Ascending aorta (tissue), 2 donors: ENCODE measurements at regions of chr11 and their contacts with region 1.

Region 1: GRCh38 chr11:12893787-12894672 is 115.1 kb upstream of the RASSF10 start:
- DNase-seq: peak in 1 of 2 donors; percentile 86
- H3K4me3 ChIP-seq: no peak overlapping the region
- H3K27ac ChIP-seq: no peak overlapping the region
- H3K4me1 ChIP-seq: peaks cover 13 to 48% of the 10 kb centered on the region in 2 donors
- H3K27me3 ChIP-seq: no peaks in the 10 kb centered on the region
- CTCF ChIP-seq: peak; percentile 75 to 95 (median 89)

Region 2: GRCh38 chr11:12052676-12053605 is 841.1 kb before region 1 on chr11:
- intact Hi-C with region 1: loop called (anchors 10 kb)
- DNase-seq: peak in 1 of 2 donors; percentile 58
- H3K4me3 ChIP-seq: no peak overlapping the region
- H3K27ac ChIP-seq: peak overlapping the region; percentile 41 to 62
- H3K4me1 ChIP-seq: peaks cover 0 to 25% of the 10 kb centered on the region in 2 donors
- H3K27me3 ChIP-seq: no peaks in the 10 kb centered on the region
- CTCF ChIP-seq: no peak

Region 3: DNA sequence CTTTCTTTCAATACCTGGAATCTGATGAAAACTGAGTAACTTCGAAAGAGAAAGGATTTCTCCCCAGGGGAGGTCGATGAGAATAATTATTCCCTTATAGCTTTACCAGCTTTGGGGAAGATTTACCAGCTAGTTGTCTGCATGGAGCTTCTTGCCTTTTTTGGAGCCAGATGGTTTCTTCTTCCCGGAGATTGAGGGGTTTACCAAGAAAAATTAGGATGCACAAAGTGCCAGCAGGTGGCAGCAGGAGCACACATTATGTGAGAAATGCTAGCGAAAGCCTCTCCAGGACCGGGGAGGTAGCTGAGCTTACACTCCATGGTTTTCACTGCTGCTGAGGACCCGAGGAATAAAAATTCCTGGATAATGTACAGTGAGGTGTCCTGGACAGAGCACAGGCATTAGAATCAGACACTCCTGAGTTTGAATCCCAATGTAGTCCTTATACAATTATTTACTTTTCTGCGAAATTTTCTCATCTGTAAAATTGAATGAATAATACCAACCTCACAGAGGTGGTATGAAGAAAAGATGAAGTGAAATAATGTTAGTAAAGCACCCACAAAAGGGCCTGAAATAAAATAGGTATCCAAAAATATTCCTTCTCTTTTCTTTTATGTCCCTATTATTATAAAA is 562.7 kb before region 1 on chr11:
- intact Hi-C with region 1: loop called (anchors 1 kb)
- DNase-seq: peak in 1 of 2 donors; percentile 88
- H3K4me3 ChIP-seq: no peak overlapping the region
- H3K27ac ChIP-seq: no peak overlapping the region
- H3K4me1 ChIP-seq: peaks cover 0 to 3% of the 10 kb centered on the region in 2 donors
- H3K27me3 ChIP-seq: no peaks in the 10 kb centered on the region
- CTCF ChIP-seq: peak; percentile 63 to 78 (median 74)

Region 4: DNA sequence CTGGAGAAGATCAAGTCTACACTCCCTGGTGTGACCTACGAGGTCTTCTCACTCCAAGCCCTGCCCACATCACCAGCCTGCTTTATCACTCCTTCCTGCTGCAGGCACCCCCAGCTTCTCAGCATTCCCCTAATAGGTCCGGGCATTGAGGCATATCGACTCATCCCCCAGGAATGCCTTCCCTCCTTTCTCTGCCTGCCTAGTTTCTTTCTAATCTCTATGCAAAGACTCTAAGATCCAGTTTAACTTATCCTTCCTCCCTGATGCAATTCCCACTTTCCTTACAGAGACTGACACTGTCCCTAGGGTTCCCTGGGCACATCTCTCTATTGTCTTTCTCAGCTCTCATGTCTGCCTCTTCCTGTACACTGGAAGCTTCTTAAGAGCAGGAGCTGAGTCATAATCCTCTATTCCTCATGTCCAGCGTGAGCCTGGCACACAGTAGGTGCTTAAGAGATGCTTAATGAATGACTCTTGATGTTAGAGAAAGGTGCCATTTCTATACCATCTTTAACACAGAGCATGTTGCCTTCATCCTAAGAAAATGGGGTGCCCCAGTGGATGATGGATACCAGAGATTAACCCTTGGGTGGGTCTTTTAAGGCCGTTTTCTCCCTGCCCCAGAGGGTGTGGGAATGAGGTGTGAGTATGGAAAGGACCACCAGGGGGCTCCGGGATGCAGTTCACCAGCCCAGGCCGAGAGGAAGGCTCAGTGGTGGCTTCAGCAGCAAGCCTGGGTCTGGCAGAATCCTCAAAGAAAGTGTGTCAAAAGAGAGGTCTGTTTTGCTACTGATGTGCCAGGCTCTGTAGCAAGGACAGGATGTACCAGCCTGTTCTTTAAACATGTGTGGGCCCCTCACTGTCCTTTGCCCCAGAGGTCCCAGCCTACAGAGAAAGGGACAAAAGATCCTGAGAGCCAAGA is 482.0 kb before region 1 on chr11:
- intact Hi-C with region 1: loop called (anchors 5 kb)
- DNase-seq: peak in 1 of 2 donors; percentile 89
- H3K4me3 ChIP-seq: no peak overlapping the region
- H3K27ac ChIP-seq: peak overlapping the region; percentile 85
- H3K4me1 ChIP-seq: peaks cover 12 to 41% of the 10 kb centered on the region in 2 donors
- H3K27me3 ChIP-seq: no peaks in the 10 kb centered on the region
- CTCF ChIP-seq: peak; percentile 69 to 75 (median 69)

Region 5: DNA sequence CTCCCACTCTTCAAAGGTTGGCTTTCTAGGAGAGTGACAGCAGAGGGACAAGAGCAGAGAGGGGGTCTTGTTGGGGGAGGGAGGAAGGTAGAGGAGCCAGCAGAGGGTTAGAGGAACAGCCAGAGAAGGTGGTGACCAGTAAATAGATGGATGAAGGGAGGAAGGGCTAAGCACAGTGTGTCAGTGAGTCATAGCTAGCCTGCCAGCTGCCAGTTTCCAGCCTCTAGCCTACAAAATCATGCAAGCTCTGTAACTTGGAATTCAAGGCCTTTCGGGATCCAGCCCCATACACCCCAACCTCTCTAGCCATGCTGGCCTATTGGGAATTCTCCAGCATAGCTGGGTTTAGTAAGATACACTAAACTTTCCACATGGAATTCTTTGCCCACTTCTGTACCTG is 367.2 kb before region 1 on chr11:
- intact Hi-C with region 1: loop called (anchors 10 kb)
- DNase-seq: no peak
- H3K4me3 ChIP-seq: no peak overlapping the region
- H3K27ac ChIP-seq: no peak overlapping the region
- H3K4me1 ChIP-seq: no peaks in the 10 kb centered on the region
- H3K27me3 ChIP-seq: no peaks in the 10 kb centered on the region
- CTCF ChIP-seq: no peak

Region 6: GRCh38 chr11:12599408-12600143 is 294.5 kb before region 1 on chr11:
- intact Hi-C with region 1: loop called (anchors 2 kb)
- DNase-seq: peak in 1 of 2 donors; percentile 65
- H3K4me3 ChIP-seq: no peak overlapping the region
- H3K27ac ChIP-seq: no peak overlapping the region
- H3K4me1 ChIP-seq: no peaks in the 10 kb centered on the region
- H3K27me3 ChIP-seq: no peaks in the 10 kb centered on the region
- CTCF ChIP-seq: peak; percentile 55 to 63 (median 56)

Region 7: DNA sequence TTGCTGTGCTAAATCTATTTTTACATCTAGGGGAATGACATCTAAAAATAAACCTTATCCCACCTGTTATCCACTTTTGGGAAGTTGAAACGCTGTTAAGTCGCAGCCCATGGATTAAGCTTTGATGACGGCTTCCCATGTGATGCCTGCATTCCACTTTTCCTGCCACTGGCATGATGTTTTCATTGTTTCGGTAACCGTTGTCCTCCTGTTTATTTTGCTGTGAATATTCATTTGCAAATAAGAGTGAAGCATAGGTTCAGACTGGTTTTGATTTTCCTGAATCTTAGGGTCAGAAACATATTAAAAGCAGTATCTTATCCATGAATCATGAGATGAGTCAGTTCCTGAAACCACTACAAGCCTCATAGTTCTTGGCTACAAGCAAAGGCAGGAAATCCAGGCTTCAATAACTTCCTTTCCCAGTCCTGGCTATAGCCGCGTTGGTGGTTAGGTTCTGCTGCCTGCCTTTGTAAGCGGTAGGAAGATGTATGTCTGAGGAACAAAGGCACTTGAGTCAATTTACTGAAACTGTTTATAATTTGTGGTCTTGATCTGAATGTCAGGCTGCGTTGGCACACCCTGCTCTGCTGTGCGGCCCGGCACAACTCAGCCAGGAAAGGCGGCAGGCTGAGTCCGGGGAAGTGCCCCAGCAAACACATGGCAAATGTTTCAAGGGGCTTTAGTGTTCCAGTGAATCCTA is 200.4 kb before region 1 on chr11:
- intact Hi-C with region 1: loop called (anchors 5 kb)
- DNase-seq: peak in 1 of 2 donors; percentile 86
- H3K4me3 ChIP-seq: peak overlapping the region; percentile 31 to 47
- H3K27ac ChIP-seq: peak overlapping the region; percentile 93 to 94
- H3K4me1 ChIP-seq: peaks cover 9 to 43% of the 10 kb centered on the region in 2 donors
- H3K27me3 ChIP-seq: no peaks in the 10 kb centered on the region
- CTCF ChIP-seq: no peak

Region 8: GRCh38 chr11:12979928-12980689 is 86.1 kb after region 1 on chr11:
- intact Hi-C with region 1: no loop called
- DNase-seq: no peak
- H3K4me3 ChIP-seq: no peak overlapping the region
- H3K27ac ChIP-seq: no peak overlapping the region
- H3K4me1 ChIP-seq: no peaks in the 10 kb centered on the region
- H3K27me3 ChIP-seq: no peaks in the 10 kb centered on the region
- CTCF ChIP-seq: no peak